ENCODE measurements at regions of chr15 and their contacts with region 1.

Region 1: GRCh38 chr15:64731012-64731806 is 44.2 kb downstream of the RBPMS2 start:
- DNase-seq: peak; percentile 90 to 98
- H3K4me3 ChIP-seq: no peak overlapping the region
- H3K4me1 ChIP-seq: no peaks in the 10 kb centered on the region
- H3K27me3 ChIP-seq: no peaks in the 10 kb centered on the region

Region 2: GRCh38 chr15:64681424-64682024 is 49.7 kb before region 1 on chr15:
- in situ Hi-C with region 1: loop called (anchors 5 kb)
- DNase-seq: peak; percentile 85 to 93
- H3K4me3 ChIP-seq: no peak overlapping the region
- H3K4me1 ChIP-seq: no peaks in the 10 kb centered on the region
- H3K27me3 ChIP-seq: no peaks in the 10 kb centered on the region

Region 3: DNA sequence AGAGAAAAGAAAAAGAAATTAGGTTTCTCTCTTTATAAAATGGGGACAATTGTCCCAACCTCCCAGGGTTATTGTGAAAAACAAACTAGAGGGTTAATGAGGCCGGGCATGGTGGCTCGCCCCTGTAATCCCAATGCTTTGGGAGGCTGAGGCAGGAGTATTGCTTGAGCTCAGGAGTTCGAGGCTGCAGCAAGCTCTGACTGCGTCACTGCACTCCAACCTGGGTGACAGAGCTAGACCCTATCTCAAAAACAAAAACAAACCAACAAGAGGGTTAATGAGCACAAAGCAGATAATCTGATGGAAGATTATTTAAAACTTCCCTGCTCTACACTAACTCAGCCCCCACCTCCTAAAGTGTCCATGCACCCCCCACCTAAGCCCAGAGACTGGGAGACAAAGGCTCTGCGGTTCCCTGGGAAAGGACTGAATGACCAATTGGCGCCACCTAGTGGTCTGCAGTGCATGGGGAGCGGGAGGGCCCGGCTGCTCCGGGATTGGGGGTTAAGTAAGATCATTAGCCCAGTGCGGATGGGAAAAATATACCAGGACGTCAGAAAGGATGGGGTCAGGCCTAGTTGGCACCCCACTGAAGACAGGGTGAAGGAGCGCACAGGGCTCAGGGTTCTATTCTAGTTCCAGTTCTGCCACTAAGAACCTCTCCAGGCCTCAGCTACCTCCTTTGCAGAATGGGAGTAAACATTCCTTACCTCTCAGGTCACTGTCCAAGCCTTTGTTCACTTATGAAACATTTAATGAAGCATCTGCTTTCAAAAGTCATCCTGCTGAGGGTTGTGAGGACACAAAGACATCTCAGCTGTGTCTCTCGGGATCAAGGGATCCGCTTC is 78.7 kb after region 1 on chr15:
- in situ Hi-C with region 1: loop called (anchors 5 kb)
- DNase-seq: peak; percentile 88 to 98
- H3K4me3 ChIP-seq: no peak overlapping the region
- H3K4me1 ChIP-seq: no peaks in the 10 kb centered on the region
- H3K27me3 ChIP-seq: no peaks in the 10 kb centered on the region

Region 4: DNA sequence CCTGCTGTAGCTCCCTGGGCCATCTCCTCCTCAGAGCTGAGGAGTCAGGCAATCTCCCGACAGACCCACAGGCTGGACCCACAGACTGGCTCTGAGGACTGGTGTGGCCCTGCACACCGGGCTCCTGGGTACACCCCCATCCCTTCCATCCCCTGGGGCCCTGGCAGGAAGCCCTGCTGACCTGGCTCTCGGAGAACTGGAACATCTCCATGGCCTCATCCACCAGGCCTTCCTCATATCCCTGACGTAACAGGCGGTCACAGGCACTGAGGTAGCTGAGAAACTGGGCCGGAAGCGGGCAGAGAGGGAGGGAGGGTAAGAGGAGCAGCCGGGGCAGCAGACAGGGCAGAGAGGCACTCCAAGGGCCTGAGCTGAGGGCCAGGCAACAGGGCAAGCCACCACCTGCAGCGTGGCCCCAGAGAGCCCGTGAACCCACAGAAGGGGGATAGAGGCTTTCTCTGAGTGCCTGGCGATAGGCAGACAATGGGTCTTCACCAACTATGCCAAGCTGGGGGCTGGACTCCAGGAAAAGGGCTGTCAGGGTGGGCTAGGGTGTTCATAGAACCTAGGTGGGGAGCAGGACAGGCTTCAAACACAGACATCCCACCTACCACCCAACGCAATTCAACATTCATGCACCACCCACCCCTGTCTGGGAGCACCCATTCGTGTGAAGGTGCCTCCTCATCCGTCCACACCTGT is 363.2 kb after region 1 on chr15:
- in situ Hi-C with region 1: loop called (anchors 10 kb)
- DNase-seq: no peak
- H3K4me3 ChIP-seq: no peak overlapping the region
- H3K4me1 ChIP-seq: peaks cover under 1% of the 10 kb centered on the region; the same call in 1 of the 2 replicates
- H3K27me3 ChIP-seq: no peaks in the 10 kb centered on the region

Measured in HAP-1 (cell line).